ENCODE measurements at regions of chr5 and their contacts with region 1.

Region 1: GRCh38 chr5:172777881-172778814 is 7.2 kb upstream of the DUSP1 start:
- DNase-seq: peak in 1 of 2 experiments; percentile 82
- ATAC-seq: peak; percentile 42 to 54
- H3K4me3 ChIP-seq: peak overlapping the region; percentile 16; the same call in 1 of the 3 replicates
- H3K27ac ChIP-seq: peak overlapping the region; percentile 97 to 100
- H3K4me1 ChIP-seq: peaks cover 93% of the 10 kb centered on the region
- CTCF ChIP-seq: no peak
- EP300 ChIP-seq: no peak
- POLR2A ChIP-seq: no peak
- RAD21 ChIP-seq: peak in 1 of 2 experiments; percentile 15; a peak in 1 of 5 replicates

Region 2: GRCh38 chr5:172868924-172869591 is 90.9 kb after region 1 on chr5:
- CTCF ChIA-PET with region 1: interaction called, 7 read pairs
- POLR2A ChIA-PET with region 1: interaction called, 61 read pairs
- DNase-seq: peak; percentile 83 to 93
- ATAC-seq: peak; percentile 79 to 80
- H3K4me3 ChIP-seq: 0 out of 3 replicates have a peak overlapping the region, but pooled peaks have one; percentile 18
- H3K27ac ChIP-seq: peak overlapping the region; percentile 96 to 99
- H3K4me1 ChIP-seq: peaks cover 95% of the 10 kb centered on the region
- CTCF ChIP-seq: no peak; the same call in 2 of the 3 replicates
- EP300 ChIP-seq: peak; percentile 91 to 95; a peak in 4 of 5 replicates
- POLR2A ChIP-seq: no peak
- RAD21 ChIP-seq: peak; percentile 55 to 70

Measured in A549 (cell line).